ENCODE measurements at regions of chr15 and their contacts with region 1.

Region 1: DNA sequence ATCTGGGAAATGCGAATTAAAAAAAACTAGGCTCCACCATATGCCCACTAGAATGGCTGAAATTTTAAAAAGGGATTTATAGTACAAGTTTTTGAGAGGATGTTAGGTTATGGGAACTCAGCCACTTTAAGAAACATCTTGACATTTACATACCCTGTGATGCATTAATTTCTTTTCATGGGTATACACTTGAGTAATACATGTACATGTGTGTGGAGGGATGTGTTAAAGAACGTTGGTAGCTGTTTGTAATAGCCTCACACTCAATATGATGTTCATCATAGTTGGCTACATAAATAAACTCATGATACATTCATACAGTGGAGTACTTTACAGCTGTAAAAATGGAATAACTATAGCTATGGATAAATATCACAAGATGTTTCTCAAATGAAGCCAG is 40.9 kb downstream of the MEF2A start:
- DNase-seq: no peak
- ATAC-seq: no peak
- H3K4me3 ChIP-seq: no peak overlapping the region
- H3K27ac ChIP-seq: no peak overlapping the region
- H3K4me1 ChIP-seq: peaks cover 3% of the 10 kb centered on the region
- H3K27me3 ChIP-seq: no peaks in the 10 kb centered on the region

Region 2: DNA sequence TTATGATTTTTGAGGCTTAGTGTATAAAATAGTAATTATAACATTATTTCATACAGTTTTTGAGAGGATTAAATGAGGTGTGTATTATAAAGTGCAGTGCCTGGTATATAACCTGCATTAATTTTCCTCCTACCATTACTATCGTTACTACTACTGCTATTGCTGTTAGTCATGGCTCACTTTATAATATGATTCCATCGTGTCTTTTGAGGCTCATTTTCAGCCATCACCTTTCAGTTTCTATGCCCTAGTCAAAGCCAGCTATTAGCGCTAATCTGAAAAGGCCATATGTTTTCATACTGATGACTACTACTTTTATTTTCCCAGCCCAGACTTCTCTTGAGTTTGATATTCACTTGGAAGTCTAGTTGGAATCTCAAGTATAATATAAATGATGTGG is 35.3 kb before region 1 on chr15:
- intact Hi-C with region 1: loop called in 1 of 4 experiments (anchors 2 kb)
- DNase-seq: no peak
- ATAC-seq: no peak
- H3K4me3 ChIP-seq: no peak overlapping the region
- H3K27ac ChIP-seq: no peak overlapping the region
- H3K4me1 ChIP-seq: peaks cover 2% of the 10 kb centered on the region
- H3K27me3 ChIP-seq: no peaks in the 10 kb centered on the region